ENCODE measurements at regions of chr5 and their contacts with region 1.

Region 1: GRCh38 chr5:132639706-132640130 is 18.3 kb upstream of the IL13 start:
- DNase-seq: no peak
- H3K4me3 ChIP-seq: no peak overlapping the region
- H3K27ac ChIP-seq: no peak overlapping the region
- H3K4me1 ChIP-seq: no peaks in the 10 kb centered on the region
- H3K27me3 ChIP-seq: no peaks in the 10 kb centered on the region
- CTCF ChIP-seq: no peak

Region 2: DNA sequence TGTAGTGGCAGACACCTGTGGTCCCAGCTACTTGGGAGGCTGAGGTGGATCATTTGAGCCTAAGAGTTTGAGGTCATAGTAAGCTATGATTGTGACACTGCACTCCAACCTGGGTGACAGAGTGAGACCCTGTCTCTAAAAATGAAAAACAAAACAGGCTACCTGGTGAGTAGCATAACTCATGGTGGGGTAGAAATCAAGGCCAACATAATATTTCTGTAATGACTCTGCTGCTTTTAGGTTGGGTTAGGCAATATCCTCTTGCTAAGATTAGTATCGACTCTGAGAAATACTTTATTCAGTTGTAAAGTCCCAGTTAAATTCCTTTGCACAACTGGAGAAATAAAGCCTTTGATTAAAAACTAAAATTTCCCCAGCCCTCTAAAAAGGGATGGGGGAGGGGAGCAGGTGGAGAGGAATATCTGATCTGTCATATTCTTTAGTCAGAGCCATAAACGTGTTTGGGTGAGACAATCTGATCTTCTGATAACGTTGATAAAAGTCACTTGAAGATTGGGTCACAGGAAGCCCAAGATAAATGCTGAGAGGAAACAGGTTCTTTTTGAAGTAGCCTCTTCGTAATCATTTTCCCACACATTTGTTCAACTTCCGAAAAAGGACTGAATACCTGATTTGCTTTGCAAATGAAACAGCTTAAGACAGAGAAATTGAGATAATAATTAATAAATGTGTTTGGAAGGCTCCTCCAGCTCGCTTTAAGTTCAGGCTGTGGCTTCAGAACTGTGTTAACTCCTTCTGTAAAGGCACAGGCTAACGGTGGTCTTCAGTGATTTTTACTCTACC is 49.0 kb after region 1 on chr5:
- intact Hi-C with region 1: loop called (anchors 5 kb)
- DNase-seq: no peak
- H3K4me3 ChIP-seq: no peak overlapping the region
- H3K27ac ChIP-seq: no peak overlapping the region
- H3K4me1 ChIP-seq: no peaks in the 10 kb centered on the region
- H3K27me3 ChIP-seq: no peaks in the 10 kb centered on the region
- CTCF ChIP-seq: no peak

Measured in ascending aorta (tissue), 2 donors.